BJ (cell line): ENCODE measurements at regions of chr5 and their contacts with region 1.

Region 1: DNA sequence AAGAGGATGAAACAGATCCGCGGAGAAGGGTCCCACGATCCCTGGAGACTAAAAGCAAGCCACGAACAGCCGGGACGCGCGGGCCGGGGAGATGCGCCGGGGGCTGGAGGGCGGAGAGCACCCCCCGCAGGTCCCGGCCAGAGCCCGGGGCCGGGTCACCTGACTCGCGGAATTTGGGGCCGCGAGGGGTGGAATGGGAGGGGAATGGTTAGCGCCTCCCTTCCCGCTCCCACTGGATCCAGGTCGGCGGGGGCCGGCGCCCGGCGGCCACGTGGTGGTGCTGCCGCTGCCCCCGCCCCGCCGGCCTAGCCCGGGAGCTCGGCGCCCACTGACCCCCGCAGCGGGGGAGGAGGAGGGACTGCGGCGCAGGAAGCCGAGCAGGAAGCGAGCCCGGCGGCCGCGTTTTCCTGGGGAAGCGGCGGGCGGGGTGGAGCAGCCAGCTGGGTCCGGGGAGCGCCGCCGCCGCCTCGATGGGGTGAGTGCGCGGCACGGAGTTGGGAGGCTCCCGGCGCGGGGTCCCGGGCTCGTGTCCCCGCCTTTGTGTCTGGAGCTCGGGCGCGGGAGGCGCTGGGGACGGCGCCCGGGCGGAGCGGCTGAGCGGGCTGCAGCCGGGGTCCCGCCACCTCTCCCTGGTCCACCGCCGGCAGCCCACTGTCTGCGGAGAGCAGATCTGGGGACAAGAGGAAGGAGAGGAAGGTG is at the start of gene RAI14:
- DNase-seq: peak; percentile 33
- H3K4me3 ChIP-seq: peak within 1 kb of the TSS; percentile 93
- H3K27me3 ChIP-seq: no peaks in the 10 kb centered on the region
- CTCF ChIP-seq: no peak
- polyA plus RNA-seq, gene RAI14: 116 and 183 TPM in 2 replicates

Region 2: DNA sequence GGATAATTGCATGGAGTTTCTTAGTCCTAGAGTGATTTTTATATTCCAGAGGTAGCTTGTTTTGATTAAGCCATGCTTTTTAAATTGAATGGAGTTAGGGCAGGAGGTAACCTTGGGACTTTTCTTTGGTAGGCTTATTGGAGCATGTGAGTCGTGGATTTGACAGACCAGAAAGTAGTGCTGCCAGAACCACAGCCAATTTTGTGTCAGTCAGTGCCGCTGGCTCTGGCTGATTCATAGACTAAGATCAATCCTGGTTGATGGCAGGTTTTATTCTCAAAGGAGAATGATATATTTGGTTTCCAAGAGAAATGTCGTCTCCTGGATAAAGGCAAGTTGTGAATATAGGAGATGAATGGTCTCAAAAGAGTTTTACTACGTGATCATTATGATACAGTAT is 20.3 kb after region 1 on chr5:
- CTCF ChIA-PET with region 1: interaction called, 3 read pairs
- POLR2A ChIA-PET with region 1: interaction called, 14 read pairs
- DNase-seq: no peak
- H3K4me3 ChIP-seq: no peak overlapping the region
- H3K27me3 ChIP-seq: no peaks in the 10 kb centered on the region
- CTCF ChIP-seq: no peak

Region 3: DNA sequence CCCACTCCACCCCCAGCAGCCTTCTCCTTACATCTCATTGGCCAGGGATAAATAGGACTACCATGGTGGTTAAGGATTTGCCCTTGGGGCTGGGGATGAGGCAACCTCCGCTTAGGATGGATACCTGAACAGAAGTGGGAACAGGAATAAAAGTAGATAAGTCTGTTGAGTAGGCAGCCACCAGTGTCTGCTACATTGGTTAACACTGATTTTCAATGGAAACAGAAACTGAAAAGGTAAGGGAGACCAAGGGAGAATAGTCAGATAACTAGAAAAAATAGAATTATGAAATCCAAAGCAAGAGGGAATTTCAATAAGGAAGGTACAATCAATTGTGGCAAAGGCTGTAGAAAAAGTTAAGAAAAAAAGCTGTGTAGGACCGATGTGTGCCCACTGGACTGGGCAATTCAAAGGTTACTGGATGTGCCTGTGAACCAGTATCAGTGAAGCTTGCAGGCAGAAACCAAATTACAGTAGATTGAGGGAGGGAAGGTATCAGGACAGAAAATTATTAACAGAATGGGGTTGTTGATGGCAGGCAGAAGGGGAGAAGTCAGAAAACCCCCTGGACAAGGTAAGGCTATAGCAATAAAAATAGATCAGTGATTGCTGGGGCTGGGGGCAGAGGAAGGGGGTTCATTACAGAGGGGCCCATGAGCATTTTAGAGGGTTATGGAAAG is 321.9 kb after region 1 on chr5:
- CTCF ChIA-PET with region 1: no interaction called
- POLR2A ChIA-PET with region 1: no interaction called
- DNase-seq: no peak
- H3K4me3 ChIP-seq: no peak overlapping the region
- H3K27me3 ChIP-seq: peaks cover 3% of the 10 kb centered on the region
- CTCF ChIP-seq: no peak